Ovary (tissue), 10 donors: ENCODE measurements at regions of chr19 and their contacts with region 1.

Region 1: DNA sequence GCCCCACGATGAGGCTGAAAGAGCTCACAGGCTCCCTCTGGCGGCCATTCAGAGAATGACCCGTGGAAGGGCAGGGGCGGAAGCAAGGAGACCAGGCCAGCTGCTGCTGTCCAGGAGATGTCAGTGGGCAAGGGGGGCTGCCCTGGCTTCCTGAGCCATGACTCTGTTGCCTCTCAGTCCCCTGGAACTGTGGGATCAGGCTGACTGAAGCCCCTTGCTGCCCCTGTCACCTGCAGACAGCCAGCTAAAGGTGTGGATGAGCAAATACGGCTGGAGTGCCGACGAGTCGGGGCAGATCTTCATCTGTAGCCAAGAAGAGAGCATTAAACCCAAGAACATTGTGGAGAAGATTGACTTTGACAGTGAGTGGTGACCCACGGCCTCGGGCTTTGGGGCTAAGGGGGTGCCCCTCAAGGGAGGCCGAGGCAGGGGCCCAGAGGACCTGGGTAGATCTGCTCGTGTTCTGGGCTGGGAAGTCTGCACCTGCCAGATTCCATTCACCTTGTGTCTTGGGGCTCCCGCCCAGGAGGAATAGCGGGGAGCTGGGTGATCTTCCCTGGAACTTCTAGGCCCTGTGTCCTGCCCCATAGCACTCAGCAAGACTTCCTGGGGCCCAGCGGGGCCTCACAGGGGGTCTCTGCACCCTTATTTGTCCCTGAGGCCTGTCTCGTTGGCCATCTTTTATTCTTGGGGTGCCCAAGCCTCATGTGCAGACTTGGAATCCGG is 12.5 kb upstream of the ACTN4 start:
- DNase-seq: peak; percentile 61 to 87 (median 81)
- H3K4me3 ChIP-seq: no peak overlapping the region
- H3K27ac ChIP-seq: no peak overlapping the region
- H3K4me1 ChIP-seq: no peaks in the 10 kb centered on the region
- H3K27me3 ChIP-seq: no peaks in the 10 kb centered on the region
- CTCF ChIP-seq: peak; percentile 81 to 96 (median 87)
- EP300 ChIP-seq: no peak
- POLR2A ChIP-seq: no peak

Region 2: DNA sequence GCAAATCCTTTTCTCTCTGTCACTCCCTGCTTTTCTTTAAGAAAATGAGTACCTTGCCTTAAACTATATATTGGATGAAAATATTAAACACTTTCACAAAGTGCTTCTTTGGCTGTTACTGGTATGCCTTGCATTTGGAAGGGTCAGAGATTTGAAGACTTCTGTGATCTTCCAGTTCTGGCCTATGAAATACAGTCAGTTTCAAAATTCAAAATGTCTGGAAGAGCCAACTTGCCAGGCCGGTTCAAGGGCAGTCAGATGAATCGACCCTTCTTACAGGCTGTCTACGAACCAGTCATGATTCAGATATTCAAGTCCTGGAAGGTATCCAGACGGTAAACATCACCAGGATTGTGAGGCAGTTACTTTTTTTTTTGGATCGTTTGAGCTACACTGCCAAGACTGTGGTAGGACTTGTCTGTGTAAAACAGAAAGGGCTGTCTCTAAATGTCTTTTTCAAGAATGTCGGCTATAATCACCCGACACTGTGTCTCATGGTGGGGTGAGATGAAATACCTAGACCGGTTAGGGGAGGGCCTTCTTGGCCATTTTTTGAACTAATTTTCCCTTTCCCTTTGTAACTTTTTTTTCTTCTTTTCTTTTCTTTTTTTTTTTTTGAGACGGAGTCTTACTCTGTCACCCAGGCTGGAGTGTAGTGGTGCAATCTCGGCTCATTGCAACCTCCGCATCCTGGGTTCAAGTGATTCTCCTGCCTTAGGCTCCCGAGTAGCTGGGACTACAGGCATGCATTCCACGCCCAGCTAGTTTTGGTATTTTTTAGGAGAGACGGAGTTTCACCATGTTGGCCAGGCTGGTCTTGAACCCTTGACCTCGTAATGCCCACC is 23.8 kb after region 1 on chr19:
- intact Hi-C with region 1: no loop called
- DNase-seq: peak in 3 of 5 donors; percentile 62 to 76 (median 64)
- H3K4me3 ChIP-seq: no peak overlapping the region
- H3K27ac ChIP-seq: peak overlapping the region; percentile 60 to 72
- H3K4me1 ChIP-seq: peaks cover 48% of the 10 kb centered on the region
- H3K27me3 ChIP-seq: no peaks in the 10 kb centered on the region
- CTCF ChIP-seq: no peak
- EP300 ChIP-seq: no peak
- POLR2A ChIP-seq: no peak

Region 3: DNA sequence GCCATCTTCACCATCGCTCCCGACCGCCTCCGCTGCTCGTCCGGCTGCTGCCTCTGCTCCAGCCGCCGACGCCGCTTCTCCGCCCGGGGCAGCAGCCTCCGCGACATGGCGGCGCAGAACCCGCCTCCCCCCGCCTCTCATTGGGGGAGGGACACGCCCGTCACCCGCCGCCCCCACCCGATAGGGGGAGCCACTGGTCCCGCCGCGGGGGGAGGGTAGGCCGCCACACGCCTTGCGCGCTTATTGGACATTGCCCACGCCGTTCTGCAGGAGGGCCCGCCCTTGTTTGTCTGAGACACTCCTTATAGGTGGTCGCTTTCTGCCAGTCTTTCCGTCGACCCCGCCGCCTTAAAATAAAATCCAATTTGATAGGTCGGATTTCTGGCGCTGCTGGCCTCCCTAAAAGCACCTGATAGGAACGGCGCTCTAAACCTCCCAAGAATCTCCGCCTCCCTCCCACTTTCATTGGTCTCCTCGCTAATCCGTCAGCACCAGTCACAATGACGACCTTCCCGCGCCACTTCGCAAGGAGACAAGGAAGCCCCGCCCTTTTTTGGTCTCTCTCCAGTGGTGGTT is 215.0 kb after region 1 on chr19 and contains the start of gene HNRNPL:
- intact Hi-C with region 1: loop called in 2 of 4 experiments (anchors 5 to 10 kb)
- DNase-seq: peak in 4 of 5 donors; percentile 99 to 100 (median 99)
- H3K4me3 ChIP-seq: peak within 1 kb of the TSS; percentile 99
- H3K27ac ChIP-seq: peak within 1 kb of the TSS; percentile 100
- H3K4me1 ChIP-seq: peaks cover 13% of the 10 kb centered on the region
- H3K27me3 ChIP-seq: no peaks in the 10 kb centered on the region
- CTCF ChIP-seq: peak; percentile 36 to 76 (median 67)
- EP300 ChIP-seq: peak; percentile 35
- POLR2A ChIP-seq: peak; percentile 99
- total RNA-seq, gene HNRNPL: 110 to 282 (median 230) TPM